Mammary epithelial cell (primary cell): ENCODE measurements at regions of chr4 and their contacts with region 1.

Region 1: GRCh38 chr4:127394516-127394915 is 238.2 kb upstream of the INTU start:
- DNase-seq: no peak
- H3K4me3 ChIP-seq: no peak overlapping the region
- H3K27ac ChIP-seq: no peak overlapping the region
- H3K4me1 ChIP-seq: no peaks in the 10 kb centered on the region
- H3K27me3 ChIP-seq: no peaks in the 10 kb centered on the region
- CTCF ChIP-seq: no peak

Region 2: GRCh38 chr4:127196655-127197352 is 197.7 kb before region 1 on chr4:
- CTCF ChIA-PET with region 1: no interaction called
- dilution Hi-C with region 1: no loop called
- in situ Hi-C with region 1: loop called in 1 of 2 experiments (anchors 10 kb)
- intact Hi-C with region 1: no loop called
- DNase-seq: no peak
- H3K4me3 ChIP-seq: no peak overlapping the region
- H3K27ac ChIP-seq: no peak overlapping the region
- H3K4me1 ChIP-seq: no peaks in the 10 kb centered on the region
- H3K27me3 ChIP-seq: no peaks in the 10 kb centered on the region
- CTCF ChIP-seq: no peak